ENCODE measurements at regions of chr1 and their contacts with region 1.

Region 1: DNA sequence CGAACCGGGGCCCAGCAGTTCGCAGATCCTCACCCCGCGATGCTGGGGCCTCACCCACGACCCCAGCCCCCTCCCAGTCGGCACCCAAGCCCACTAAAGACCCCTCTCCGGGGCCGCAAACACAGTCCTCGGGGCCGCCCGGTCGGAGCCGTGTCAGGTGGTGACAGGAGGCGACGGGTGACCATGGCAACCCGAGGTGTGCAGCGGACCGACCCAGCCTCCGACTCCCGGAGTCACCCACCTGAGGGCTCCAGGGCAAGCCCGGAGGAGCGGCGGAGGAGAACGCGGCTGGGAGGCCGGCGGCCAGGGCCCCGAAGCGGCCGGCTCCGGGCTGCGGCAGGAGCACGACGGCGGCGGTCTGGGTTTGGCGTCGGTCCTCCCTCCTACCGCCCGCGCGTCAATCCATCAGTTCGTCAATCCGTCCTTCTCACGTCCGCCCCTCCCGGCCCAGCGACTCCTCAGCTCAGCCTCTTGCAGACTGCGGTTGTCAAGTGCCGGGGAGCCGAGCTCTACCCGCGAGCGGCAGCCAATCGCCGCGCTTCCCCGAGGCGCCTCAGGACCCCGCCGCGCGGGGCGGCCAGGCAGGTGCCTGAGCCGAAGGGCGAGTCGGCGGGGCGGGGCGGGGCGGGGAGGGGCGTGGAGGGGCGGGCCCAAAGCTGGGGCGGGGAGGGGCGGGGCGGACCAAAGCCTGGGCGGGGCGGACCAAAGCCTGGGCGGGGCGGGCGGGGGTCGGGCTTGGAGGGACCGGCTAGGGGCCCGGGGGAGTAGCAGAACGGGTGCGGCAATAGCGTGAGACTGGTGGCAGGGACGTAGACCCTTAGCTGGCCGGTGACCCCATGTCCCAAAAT is at the start of gene WDR47:
- DNase-seq: peak; percentile 94
- H3K4me3 ChIP-seq: peak within 1 kb of the TSS; percentile 92 to 96 (median 94)
- H3K27ac ChIP-seq: peak within 1 kb of the TSS; percentile 38
- H3K4me1 ChIP-seq: peaks cover 10% of the 10 kb centered on the region
- H3K27me3 ChIP-seq: no peaks in the 10 kb centered on the region
- CTCF ChIP-seq: no peak
- POLR2A ChIP-seq: peak; percentile 98
- total RNA-seq, gene WDR47: 18.2 and 19.0 TPM in 2 replicates

Region 2: DNA sequence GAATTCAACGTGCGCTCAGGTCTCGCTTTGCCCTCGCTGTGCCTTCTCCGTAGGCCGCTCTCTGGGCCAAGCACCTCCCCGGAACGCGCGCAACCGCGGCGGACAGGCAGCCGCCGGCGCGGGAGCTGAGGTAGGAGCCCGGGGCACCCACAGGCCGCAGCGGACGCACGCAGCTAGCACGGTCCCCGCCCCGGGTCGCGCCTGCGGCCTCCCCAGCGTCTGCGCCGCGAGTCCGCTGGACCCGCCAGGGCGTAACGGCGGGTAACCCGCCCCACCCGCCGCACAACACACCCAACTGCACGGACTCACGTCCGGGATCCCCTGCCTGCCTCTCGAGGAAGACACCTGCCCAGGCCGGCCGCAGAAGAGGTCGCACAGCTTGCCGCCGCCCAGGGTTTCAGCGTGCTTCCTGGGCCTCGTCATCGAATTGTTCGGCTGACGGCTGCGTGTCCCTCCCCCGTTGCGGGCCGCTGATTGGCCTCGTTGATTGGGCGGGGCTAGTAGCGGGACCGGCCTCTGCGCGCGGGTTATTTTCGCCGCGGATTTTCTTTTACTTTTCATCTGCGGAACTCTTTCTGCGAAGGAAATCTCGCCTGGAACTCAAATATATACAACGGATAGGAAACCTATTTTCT is 78.7 kb before region 1 on chr1 and contains the start of gene CLCC1:
- CTCF ChIA-PET with region 1: no interaction called
- POLR2A ChIA-PET with region 1: interaction called, 3 read pairs
- dilution Hi-C with region 1: no loop called
- intact Hi-C with region 1: loop called (anchors 2 kb)
- DNase-seq: peak; percentile 90
- H3K4me3 ChIP-seq: peak within 1 kb of the TSS; percentile 89 to 96 (median 94)
- H3K27ac ChIP-seq: peak within 1 kb of the TSS; percentile 76
- H3K4me1 ChIP-seq: peaks cover 9% of the 10 kb centered on the region
- H3K27me3 ChIP-seq: no peaks in the 10 kb centered on the region
- CTCF ChIP-seq: no peak
- POLR2A ChIP-seq: peak; percentile 84
- total RNA-seq, gene CLCC1: 28.8 and 36.3 TPM in 2 replicates

Region 3: DNA sequence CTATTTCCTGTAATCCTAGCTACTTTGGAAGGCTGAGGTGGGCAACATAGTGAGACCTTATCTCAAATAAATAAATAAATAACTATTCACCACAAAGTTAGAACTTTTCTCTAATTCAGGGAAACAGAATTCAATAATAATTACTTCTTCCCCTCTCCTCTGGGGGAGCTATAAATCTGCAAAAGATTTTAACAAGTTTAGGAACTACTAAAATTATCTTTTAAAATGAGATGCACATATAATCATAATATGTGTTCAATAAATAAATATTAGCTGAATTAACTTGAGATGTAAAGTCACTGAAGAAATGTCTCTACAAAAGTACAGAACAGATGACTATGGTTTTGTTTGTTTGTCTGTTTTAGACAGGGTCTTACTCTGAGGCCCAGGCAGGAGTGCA is 14.0 kb before region 1 on chr1:
- CTCF ChIA-PET with region 1: interaction called, 10 read pairs
- POLR2A ChIA-PET with region 1: interaction called, 7 read pairs
- dilution Hi-C with region 1: no loop called
- intact Hi-C with region 1: no loop called
- DNase-seq: no peak
- H3K4me3 ChIP-seq: no peak overlapping the region
- H3K27ac ChIP-seq: no peak overlapping the region
- H3K4me1 ChIP-seq: no peaks in the 10 kb centered on the region
- H3K27me3 ChIP-seq: no peaks in the 10 kb centered on the region
- CTCF ChIP-seq: no peak
- POLR2A ChIP-seq: no peak

Region 4: GRCh38 chr1:109061183-109061582 is 19.3 kb after region 1 on chr1:
- CTCF ChIA-PET with region 1: no interaction called
- POLR2A ChIA-PET with region 1: interaction called, 7 read pairs
- dilution Hi-C with region 1: no loop called
- intact Hi-C with region 1: loop called (anchors 2 kb)
- DNase-seq: no peak
- H3K4me3 ChIP-seq: no peak overlapping the region
- H3K27ac ChIP-seq: no peak overlapping the region
- H3K4me1 ChIP-seq: no peaks in the 10 kb centered on the region
- H3K27me3 ChIP-seq: no peaks in the 10 kb centered on the region
- CTCF ChIP-seq: no peak
- POLR2A ChIP-seq: no peak

Region 5: DNA sequence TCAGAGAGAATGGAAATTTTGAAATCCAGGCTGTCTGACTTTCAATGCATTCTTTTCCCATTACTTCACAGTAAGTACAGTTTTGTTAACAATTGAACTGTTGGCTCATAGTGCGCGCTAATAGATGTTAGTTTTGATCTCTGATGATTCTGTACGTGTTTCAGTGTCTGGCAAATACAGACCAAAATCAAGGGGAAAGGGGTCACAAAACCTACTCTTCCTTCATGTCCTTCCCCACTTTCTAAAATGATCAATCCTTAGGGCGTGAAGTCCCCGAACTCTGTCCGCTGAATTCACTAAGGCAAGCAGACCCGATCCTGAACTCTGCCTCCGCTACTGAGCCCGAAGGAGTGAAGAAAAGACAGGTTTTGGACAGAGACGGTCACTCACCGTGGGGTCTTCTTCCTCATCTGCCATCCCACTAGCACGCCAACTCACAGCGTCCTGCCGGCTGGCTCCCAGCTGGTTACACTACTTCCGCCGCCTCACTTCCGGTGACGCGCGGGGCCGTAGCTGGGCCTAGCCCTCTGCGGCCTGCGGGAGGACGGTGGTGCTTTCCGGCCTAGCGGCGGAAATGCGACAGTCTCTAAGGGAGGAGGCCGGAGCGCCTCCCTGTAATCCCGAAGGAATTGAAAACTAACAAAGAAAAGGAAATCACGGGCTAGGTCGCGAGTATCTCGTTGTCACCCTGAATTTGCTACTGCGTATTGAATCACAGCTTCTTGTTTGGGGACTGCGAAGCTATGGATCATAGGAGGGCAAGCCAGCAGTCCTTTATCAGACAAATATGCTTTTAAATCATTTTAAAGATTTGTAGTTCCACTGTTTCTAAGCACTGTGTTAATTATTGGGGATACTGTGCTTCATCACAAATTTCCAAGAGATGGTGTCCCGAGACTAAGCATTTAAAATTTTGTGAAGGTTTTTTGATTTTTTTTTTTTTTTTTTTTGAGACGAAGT is 34.0 kb after region 1 on chr1 and contains the start of gene TAF13:
- CTCF ChIA-PET with region 1: no interaction called
- POLR2A ChIA-PET with region 1: interaction called, 6 read pairs
- dilution Hi-C with region 1: no loop called
- intact Hi-C with region 1: loop called (anchors 1 kb)
- DNase-seq: peak; percentile 96
- H3K4me3 ChIP-seq: peak within 1 kb of the TSS; percentile 53 to 90 (median 67)
- H3K27ac ChIP-seq: peak within 1 kb of the TSS; percentile 93
- H3K4me1 ChIP-seq: peaks cover 21% of the 10 kb centered on the region
- H3K27me3 ChIP-seq: no peaks in the 10 kb centered on the region
- CTCF ChIP-seq: peak in 1 of 2 donors; percentile 4
- POLR2A ChIP-seq: peak; percentile 97
- total RNA-seq, gene TAF13: 42.3 and 54.9 TPM in 2 replicates

Region 6: DNA sequence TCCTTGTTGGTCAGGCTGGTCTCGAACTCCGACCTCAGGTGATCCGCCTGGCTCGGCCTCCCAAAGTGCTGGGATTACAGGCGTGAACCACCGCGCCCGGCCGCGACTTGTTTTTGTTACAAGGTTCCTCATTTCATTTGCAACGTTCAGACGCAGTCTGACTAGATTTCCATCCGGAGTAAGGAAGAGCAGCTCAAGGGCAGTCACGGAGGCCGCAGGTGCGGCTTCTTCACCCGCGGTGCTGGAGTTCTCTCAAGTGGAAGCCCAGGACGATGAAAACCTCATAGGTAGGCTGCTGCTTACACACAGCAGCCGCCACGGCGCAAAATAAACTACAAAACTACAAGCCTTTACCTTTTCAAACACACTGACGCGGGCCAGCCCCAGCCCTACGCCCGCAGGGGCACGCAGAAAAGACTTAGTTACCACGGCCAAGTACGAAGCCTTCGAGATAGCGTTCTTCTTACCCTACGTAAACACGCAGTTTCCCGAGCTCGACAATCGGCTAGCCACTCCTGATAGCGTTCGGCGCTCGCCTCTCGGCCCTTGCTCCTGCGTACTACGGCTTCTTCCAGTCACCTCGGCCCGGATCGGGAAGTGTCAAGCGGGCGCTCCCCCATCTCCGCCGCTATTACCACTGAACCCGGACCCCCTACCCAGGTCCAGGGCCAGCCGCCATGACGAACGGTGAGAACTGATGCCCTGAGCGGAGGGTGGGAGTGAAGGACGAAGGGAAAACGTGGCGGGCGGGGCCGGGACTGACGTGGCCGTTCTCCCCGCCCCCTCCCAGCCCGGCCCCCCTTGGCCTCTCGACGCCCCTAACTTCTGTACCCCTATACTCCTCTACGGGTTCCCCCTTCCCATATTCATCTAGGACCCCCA is 48.6 kb after region 1 on chr1 and contains the start of gene TMEM167B:
- CTCF ChIA-PET with region 1: interaction called, 3 read pairs
- POLR2A ChIA-PET with region 1: no interaction called
- dilution Hi-C with region 1: no loop called
- intact Hi-C with region 1: loop called (anchors 1 kb)
- DNase-seq: peak; percentile 99
- H3K4me3 ChIP-seq: peak within 1 kb of the TSS; percentile 97 to 99 (median 97)
- H3K27ac ChIP-seq: peak within 1 kb of the TSS; percentile 63
- H3K4me1 ChIP-seq: peaks cover 13% of the 10 kb centered on the region
- H3K27me3 ChIP-seq: no peaks in the 10 kb centered on the region
- CTCF ChIP-seq: no peak
- POLR2A ChIP-seq: peak; percentile 74
- total RNA-seq, gene TMEM167B: 19.9 and 21.1 TPM in 2 replicates

Region 7: GRCh38 chr1:109099938-109100773 is 58.3 kb after region 1 on chr1:
- CTCF ChIA-PET with region 1: interaction called, 7 read pairs
- POLR2A ChIA-PET with region 1: interaction called, 15 read pairs
- dilution Hi-C with region 1: no loop called
- intact Hi-C with region 1: no loop called
- DNase-seq: peak; percentile 95
- H3K4me3 ChIP-seq: peak overlapping the region; percentile 62 to 97 (median 90)
- H3K27ac ChIP-seq: peak overlapping the region; percentile 76
- H3K4me1 ChIP-seq: no peaks in the 10 kb centered on the region
- H3K27me3 ChIP-seq: no peaks in the 10 kb centered on the region
- CTCF ChIP-seq: peak; percentile 90 to 94
- POLR2A ChIP-seq: peak; percentile 99

Measured in endothelial cell of umbilical vein (primary cell).